ENCODE measurements at regions of chr14 and their contacts with region 1.

Region 1: GRCh38 chr14:74493343-74494261 is at the start of gene ISCA2:
- DNase-seq: peak; percentile 98
- total RNA-seq, gene ISCA2: 40.9 and 48.5 TPM in 2 replicates

Region 2: DNA sequence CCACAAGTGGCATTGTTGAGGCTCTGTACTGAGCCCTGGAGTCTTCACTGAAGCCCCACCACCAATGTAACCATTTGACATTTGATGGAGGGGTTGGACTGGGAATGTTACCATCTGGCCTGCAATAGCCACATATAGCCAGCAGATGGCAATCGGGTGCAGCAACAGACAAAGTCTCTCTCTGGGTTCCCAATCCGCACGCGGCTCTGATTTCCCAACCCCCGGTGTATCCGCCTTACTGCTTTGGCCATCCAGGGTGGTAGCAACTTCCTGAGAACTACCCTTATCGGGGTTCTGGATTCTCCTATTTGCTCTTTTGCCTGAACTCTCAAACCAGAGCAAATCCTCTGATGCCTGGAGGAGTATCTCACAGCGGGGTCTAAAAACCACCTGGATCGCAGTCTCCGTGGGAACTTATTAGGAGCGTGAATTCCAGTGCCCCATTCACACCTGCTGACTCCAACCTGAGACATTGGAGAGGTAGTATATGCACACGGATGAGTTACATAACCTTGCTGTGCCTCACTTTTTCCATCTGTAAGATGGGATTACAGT is 131.2 kb before region 1 on chr14:
- in situ Hi-C with region 1: loop called (anchors 25 kb)
- DNase-seq: peak; percentile 34

Measured in Caki2 (cell line).